AG04449 (cell line): ENCODE measurements at regions of chr4 and their contacts with region 1.

Region 1: GRCh38 chr4:183261953-183262775 is 57.9 kb downstream of the CLDN22 start:
- DNase-seq: peak; percentile 29
- H3K4me3 ChIP-seq: no peak overlapping the region
- CTCF ChIP-seq: peak; percentile 70

Region 2: DNA sequence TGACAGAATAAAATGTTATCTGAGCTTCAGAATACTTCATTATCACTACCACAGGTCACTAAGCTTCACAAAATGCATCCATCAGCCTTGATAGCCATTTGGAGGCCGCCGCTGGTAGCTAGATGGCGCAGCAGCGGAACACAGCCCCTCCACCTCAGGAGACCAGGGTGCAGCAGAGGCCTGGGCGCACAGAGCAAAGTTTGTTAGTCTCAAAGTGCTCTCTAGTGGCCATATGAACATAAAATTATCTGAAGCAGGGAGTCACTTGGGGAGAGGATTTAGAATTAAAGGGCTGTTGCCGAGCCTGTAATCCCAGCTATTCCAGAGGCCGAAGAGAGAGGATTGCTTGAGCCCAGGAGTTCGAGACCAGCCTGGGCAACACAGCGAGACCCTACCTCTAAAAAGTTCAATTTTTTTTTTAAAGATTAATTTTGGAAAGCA is 336.8 kb before region 1 on chr4:
- CTCF ChIA-PET with region 1: interaction called, 110 read pairs
- POLR2A ChIA-PET with region 1: no interaction called
- DNase-seq: no peak
- H3K4me3 ChIP-seq: no peak overlapping the region
- CTCF ChIP-seq: peak; percentile 47

Region 3: DNA sequence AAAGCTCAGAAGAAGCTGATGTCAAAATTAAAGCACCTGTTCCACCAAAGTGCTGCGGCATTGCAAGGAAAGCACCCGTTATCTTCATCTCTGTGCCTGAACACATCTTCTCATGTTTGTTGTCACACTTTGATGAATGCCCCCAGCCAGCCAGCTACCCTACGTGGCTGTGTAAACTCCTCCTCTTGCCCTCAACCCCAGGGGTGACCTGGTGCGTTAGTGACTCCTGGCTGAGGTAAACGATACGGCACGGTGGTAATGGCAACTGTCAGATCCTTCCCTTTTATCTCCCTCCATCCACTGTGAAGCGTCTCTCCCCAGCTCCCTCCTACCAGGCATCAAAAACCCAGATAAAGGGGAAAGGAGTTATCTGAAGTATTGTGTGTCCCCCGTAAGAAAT is 253.7 kb before region 1 on chr4:
- CTCF ChIA-PET with region 1: no interaction called
- POLR2A ChIA-PET with region 1: no interaction called
- DNase-seq: no peak
- H3K4me3 ChIP-seq: no peak overlapping the region
- CTCF ChIP-seq: no peak

Region 4: DNA sequence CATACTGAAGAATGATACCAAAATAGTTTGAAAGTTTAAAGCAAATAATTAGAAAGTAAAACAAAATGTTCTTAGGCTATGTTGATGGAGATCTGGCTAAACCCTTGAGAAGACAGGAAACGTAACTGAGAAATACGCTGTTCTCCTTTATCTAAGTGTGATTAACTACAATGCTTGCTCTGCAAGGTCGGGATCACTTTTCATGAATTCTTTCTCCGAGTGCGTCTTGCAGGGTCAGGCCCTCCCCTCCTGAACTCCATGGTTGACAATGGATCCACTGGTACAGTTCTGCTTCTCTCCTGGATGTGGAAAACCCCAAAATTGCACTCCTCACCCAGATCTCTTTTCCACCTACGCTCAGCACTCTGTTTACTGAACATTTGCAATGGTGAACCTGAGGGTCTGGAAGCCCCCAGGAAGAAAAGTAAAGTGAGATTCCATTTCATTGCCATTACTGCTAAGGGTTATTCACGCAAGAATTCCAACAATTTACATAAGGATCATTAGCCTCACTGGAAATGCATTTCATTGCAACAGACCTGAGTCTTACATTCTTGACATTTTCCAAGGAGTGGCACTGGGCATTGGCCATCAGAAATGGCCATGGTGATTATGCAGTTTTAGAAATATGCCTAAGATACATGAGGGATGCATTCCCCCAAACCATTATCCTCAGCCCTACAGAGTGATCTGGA is 187.7 kb before region 1 on chr4:
- CTCF ChIA-PET with region 1: interaction called, 827 read pairs
- POLR2A ChIA-PET with region 1: no interaction called
- DNase-seq: no peak
- H3K4me3 ChIP-seq: no peak overlapping the region
- CTCF ChIP-seq: no peak

Region 5: DNA sequence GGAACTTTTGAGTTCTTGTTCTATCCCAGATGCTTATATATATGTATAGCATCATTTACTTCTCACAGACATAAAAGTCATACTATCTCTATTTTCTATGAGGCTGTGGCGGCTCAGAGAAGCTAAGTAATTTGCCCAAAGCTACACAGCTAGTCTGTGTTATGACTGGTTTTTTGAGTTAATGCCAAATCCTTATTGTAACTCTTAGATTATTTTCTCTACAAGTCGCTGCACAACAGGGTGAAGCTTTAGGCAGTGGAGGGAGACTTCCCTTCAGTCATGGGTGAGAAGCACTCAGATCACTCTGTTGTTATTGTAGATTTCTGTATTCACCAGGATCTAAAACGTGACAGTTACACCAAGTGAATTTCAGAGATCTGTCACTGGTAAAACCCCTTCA is 115.0 kb before region 1 on chr4:
- CTCF ChIA-PET with region 1: interaction called, 10 read pairs
- POLR2A ChIA-PET with region 1: no interaction called
- DNase-seq: no peak
- H3K4me3 ChIP-seq: no peak overlapping the region
- CTCF ChIP-seq: no peak

Region 6: GRCh38 chr4:183272384-183272783 is 10.2 kb after region 1 on chr4:
- CTCF ChIA-PET with region 1: interaction called, 41 read pairs
- POLR2A ChIA-PET with region 1: no interaction called
- DNase-seq: no peak
- H3K4me3 ChIP-seq: no peak overlapping the region
- CTCF ChIP-seq: no peak

Region 7: GRCh38 chr4:183398227-183399125 is 136.3 kb after region 1 on chr4:
- CTCF ChIA-PET with region 1: interaction called, 10 read pairs
- POLR2A ChIA-PET with region 1: no interaction called
- DNase-seq: no peak
- H3K4me3 ChIP-seq: peak overlapping the region; percentile 46
- CTCF ChIP-seq: peak; percentile 82